Activated CD4-positive, alpha-beta T cell treated with anti-CD3 and anti-CD28 coated beads, Interleukin-2, amount 10 ng/mL, durations not matched to agents 24 days and 14 days (primary cell): ENCODE measurements at regions of chr1 and their contacts with region 1.

Region 1: GRCh38 chr1:15152318-15153183 is 996 bp upstream of the TMEM51 start:
- DNase-seq: peak; percentile 69
- H3K4me3 Mint-ChIP-seq: peak overlapping the region; percentile 73
- H3K27ac Mint-ChIP-seq: no peak overlapping the region
- H3K4me1 Mint-ChIP-seq: peaks cover 23% of the 10 kb centered on the region
- H3K27me3 Mint-ChIP-seq: peaks cover 59% of the 10 kb centered on the region

Region 2: DNA sequence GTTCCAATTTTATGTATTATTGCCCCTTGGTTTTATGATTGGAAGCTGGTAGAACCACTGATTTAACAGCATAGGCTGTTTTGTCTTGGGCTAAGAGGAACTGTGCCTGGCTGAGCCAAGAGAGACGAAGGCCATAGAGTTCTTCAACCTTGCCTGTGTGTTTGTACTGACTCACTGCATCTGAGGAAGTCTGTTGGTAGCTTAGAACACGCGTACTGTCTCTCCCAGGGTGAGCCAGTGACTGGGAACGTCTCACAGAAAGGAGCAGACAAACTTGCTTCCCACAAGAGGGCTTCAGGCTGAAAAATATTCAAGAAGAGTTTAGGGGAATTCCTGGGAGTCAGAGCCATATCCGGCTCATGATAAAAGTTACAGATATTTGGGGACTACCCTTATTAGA is 15.9 kb after region 1 on chr1:
- intact Hi-C with region 1: no loop called
- DNase-seq: no peak
- H3K4me3 Mint-ChIP-seq: no peak overlapping the region
- H3K27ac Mint-ChIP-seq: no peak overlapping the region
- H3K4me1 Mint-ChIP-seq: peaks cover 5% of the 10 kb centered on the region
- H3K27me3 Mint-ChIP-seq: peaks cover 30% of the 10 kb centered on the region

Region 3: GRCh38 chr1:15272009-15272788 is 119.6 kb after region 1 on chr1:
- intact Hi-C with region 1: loop called (anchors 10 kb)
- DNase-seq: peak; percentile 80
- H3K4me3 Mint-ChIP-seq: no peak overlapping the region
- H3K27ac Mint-ChIP-seq: no peak overlapping the region
- H3K4me1 Mint-ChIP-seq: peaks cover 5% of the 10 kb centered on the region
- H3K27me3 Mint-ChIP-seq: peaks cover 33% of the 10 kb centered on the region